Activated CD4-positive, alpha-beta T cell treated with anti-CD3 and anti-CD28 coated beads for 36 hours (primary cell): ENCODE measurements at regions of chr2 and their contacts with region 1.

Region 1: DNA sequence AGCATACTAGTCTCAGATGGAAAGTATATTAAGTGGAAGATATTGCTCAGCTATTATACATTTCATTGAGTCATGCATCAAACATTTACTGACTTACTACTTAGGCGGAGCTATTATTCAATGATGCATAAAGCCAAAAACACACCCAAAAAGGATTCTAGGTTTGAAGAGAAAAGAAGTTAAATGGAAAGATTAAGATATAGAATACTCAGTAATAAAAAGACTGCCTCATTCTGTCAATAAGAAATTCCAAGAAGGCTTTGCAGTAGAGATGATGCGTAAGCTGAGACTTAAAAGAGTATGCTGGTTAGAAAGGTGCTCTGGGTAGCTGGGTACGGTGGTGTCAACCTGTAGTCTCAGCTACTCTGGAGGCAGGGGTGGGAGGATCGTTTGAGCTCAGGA is 27.6 kb downstream of the STK17B start:
- DNase-seq: no peak
- ATAC-seq: peak; percentile 62
- H3K4me3 Mint-ChIP-seq: peak overlapping the region; percentile 39
- H3K27ac Mint-ChIP-seq: peak overlapping the region; percentile 87
- H3K4me1 Mint-ChIP-seq: peaks cover 68% of the 10 kb centered on the region
- H3K27me3 Mint-ChIP-seq: no peaks in the 10 kb centered on the region

Region 2: DNA sequence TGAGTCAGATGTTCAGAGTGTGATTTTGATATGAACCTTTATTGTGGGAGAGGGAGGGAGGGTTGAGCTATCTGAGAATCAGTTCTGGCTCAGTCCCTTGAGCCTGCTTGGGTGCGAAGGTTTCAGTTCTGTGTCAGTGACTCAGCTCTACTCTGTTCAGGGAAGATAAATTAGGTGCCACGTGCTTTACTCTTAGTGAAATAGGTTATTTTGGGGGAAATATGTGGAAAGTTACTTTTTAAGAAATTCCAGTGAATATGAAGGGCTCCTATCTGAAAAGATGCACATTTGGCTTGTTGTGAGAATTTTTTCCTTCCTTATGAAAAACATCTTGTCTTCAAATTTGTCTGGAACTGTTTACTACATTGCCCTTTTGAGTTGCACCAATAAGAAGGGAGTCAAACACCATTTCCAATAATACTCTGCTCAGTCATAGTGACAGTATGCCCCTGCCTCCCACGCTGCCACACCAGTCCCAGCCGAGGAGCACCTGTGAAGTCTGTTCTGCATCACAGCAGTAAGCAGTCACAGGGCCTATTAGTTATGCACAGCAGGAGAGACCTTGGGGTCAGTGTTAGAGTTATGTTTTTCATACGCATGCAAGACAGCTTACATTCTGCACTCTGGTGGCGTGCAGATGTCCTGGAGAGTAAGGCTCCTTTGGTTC is 42.3 kb before region 1 on chr2:
- CTCF ChIA-PET with region 1: interaction called, 4 read pairs
- POLR2A ChIA-PET with region 1: interaction called, 4 read pairs
- intact Hi-C with region 1: loop called in 1 of 2 experiments (anchors 5 kb)
- DNase-seq: peak; percentile 75
- ATAC-seq: peak; percentile 97
- H3K4me3 Mint-ChIP-seq: no peak overlapping the region
- H3K27ac Mint-ChIP-seq: peak overlapping the region; percentile 74
- H3K4me1 Mint-ChIP-seq: peaks cover 42% of the 10 kb centered on the region
- H3K27me3 Mint-ChIP-seq: no peaks in the 10 kb centered on the region

Region 3: DNA sequence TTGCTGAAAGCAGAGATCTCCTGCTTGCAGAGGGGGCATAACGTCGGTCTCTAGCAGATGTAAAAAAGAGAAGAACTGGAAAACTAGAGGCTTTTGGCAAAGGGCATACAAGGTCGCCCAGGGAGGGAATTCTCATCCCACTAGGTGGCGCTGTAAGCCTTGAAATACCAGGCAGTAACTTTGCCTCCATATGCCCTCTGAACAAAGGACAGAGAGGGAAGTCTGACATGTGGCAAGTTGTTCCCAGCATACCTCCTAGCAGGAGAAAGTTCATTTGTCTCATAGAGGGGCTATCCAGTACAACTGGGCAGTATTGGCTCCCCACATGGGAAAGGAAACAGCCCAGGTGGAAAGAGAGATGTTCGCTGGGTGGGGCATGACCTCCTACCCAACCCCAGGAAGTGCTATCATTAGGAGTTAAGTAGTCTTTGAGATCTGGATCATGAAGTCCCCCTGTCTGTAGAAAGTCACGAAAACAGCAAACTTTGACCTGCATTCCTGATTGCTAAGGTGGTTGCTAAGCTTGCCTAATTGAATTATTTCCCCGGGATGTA is 12.3 kb before region 1 on chr2:
- CTCF ChIA-PET with region 1: interaction called, 14 read pairs
- POLR2A ChIA-PET with region 1: no interaction called
- intact Hi-C with region 1: no loop called
- DNase-seq: peak; percentile 83
- ATAC-seq: peak; percentile 62
- H3K4me3 Mint-ChIP-seq: no peak overlapping the region
- H3K27ac Mint-ChIP-seq: peak overlapping the region; percentile 65
- H3K4me1 Mint-ChIP-seq: peaks cover 5% of the 10 kb centered on the region
- H3K27me3 Mint-ChIP-seq: no peaks in the 10 kb centered on the region